Activated T-helper 1 cell treated with anti-CD3 and anti-CD28 coated beads, Interleukin-12 subunit alpha, Interleukin-12 subunit beta, Interleukin-2, Interleukin-4 antibody, amounts not matched to agents 30 ng/mL and 10 ng/mL and 1 ng/mL, durations not matched to agents 14 hours and 24 hours and 36 hours (primary cell): ENCODE measurements at regions of chr11 and their contacts with region 1.

Region 1: DNA sequence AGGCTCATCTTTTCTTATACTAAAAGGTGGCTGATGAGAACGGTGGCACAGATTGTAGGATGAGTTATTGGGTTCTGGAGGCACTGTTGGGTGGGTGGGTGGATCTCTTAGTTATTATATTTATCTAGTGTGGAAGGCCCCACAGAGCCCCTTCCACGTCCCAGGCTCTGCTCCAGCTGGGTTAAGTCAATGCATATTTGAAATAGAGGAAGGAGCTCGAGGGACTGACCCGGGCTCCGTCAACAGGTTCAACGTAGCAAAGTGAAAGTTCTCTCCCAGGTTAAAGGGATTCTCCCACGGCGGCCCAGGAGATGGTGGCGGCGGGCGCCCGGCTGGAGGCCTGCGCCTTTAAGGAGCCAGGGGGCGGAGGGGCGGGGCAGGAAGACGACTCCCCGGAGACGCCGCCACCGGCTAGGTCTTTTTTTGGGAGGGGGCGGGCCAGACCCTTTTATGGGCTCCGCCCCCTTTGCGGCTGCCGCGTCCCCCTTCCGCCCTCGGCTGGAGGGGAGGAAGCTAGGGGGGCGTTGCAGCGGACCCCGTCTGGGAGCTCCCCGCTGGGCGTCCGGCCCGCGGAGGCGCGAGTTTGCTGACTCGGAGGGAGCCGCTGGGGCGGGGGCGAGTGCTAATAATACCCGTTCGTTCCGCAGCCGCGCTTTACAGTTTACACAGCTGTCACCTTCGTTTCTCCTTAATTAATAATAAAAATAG is 1.5 kb upstream of the INPPL1 start:
- DNase-seq: peak; percentile 95
- H3K4me3 Mint-ChIP-seq: peak overlapping the region; percentile 85
- H3K27ac Mint-ChIP-seq: peak overlapping the region; percentile 83
- H3K4me1 Mint-ChIP-seq: peaks cover 20% of the 10 kb centered on the region
- H3K27me3 Mint-ChIP-seq: peaks cover 4% of the 10 kb centered on the region

Region 2: GRCh38 chr11:71787098-71787823 is 435.8 kb before region 1 on chr11:
- intact Hi-C with region 1: loop called (anchors 1 kb)
- DNase-seq: peak; percentile 91
- H3K4me3 Mint-ChIP-seq: peak overlapping the region; percentile 97
- H3K27ac Mint-ChIP-seq: peak overlapping the region; percentile 97
- H3K4me1 Mint-ChIP-seq: peaks cover 23% of the 10 kb centered on the region
- H3K27me3 Mint-ChIP-seq: no peaks in the 10 kb centered on the region

Region 3: DNA sequence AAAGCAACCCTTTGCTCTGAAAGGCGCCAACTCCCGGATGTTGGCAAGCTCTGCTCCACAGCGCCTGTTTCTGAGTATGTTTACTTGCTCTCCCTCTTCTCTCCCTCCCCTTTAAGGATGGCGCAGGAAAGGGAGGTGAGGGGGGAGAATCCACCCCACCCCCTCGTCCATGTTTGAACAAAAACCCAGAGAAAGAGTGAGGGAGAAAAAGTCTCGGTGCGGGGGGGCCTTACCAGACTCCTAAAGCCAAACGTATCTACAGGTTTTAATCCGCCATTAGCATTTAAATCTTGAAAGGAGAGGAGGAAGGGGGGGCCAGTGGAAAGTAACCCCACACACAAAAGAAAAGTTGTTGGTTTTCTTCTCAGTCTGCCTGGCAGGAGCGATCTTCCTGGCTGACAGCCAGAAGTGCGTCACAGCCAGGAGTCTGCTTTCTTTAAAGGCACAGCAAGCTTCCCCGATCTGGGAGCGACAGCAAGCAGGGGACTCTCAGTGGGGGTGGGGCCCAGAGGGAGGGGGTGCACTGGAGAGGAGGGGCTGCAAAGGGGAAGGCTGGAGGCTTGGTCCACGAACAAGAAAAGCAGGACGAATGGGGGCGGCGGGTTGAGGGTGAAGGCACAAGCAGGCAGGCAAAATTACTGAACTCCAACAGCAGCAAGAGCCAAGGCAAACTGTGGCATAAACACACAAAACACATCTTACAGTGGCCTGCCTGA is 182.2 kb before region 1 on chr11:
- intact Hi-C with region 1: loop called (anchors 1 kb)
- DNase-seq: peak; percentile 59
- H3K4me3 Mint-ChIP-seq: no peak overlapping the region
- H3K27ac Mint-ChIP-seq: no peak overlapping the region
- H3K4me1 Mint-ChIP-seq: peaks cover 23% of the 10 kb centered on the region
- H3K27me3 Mint-ChIP-seq: no peaks in the 10 kb centered on the region

Region 4: DNA sequence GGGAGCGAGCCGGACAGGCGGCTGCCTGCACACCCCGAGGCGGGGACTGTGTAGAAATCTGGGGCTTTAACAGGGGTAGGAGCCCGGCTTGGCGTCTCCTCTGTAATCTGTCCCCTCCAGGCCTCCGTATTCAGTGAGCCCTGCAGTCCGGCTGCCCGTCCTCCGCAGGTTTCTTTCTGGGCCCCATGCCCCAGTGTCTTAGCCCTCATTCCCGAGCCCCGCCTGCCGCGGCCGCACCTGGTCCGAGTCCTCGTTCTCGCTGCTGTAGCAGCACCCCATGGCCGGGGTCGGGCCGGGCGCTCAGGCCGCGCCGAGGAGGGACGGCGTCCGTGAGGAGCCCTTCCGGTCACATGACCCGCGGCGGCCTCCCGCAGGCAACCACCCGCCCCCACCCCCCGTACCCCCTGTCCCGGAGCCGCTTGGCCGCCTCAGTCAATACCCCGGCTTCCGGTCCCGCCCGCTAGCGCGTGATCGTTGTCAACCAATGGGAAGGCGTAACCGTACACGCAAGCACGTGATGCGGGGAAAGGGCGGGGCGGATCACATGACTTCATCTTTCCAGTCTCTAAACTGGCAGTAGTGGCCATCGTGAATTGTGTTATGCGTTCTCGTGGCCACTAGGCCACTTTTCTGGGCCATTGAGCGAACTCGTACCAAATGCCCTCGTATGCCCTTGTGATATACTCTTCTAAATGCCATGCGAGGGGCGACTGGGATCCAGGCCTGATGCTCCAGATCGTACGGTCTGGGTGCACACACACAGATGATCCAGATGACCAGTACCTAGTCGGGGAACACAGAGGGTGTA is 119.9 kb before region 1 on chr11 and contains the start of gene LAMTOR1:
- intact Hi-C with region 1: loop called (anchors 1 kb)
- DNase-seq: peak; percentile 97
- H3K4me3 Mint-ChIP-seq: peak within 1 kb of the TSS; percentile 95
- H3K27ac Mint-ChIP-seq: peak within 1 kb of the TSS; percentile 87
- H3K4me1 Mint-ChIP-seq: peaks cover 41% of the 10 kb centered on the region
- H3K27me3 Mint-ChIP-seq: no peaks in the 10 kb centered on the region
- total RNA-seq, gene LAMTOR1: 70.2 and 77.7 TPM in 2 replicates

Region 5: DNA sequence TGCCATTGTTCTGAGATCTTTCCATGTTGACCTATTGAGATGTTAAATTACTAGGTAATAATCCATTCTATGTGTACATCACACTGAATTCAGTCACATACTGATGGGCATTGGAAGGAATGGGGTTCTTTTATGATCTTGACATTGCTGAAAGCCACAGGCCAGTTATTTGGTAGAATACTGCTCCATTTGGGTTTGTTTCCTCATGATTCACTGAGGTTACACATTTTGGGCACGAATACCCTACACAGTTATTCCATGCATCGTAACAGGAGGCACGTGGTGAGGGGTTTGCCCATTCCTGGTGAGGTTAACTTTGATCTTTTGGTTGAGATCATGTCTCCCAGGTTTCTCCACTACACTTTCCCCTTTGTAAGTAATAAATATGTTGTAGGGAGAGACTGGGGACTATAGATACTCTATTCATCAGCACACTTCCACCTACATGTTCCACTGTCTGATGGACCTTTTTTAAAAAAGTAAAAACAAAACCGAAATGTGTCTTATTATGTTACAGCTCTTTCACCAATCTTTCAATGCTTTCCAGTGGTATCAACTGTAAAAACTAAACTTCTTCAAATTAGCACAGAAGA is 43.2 kb before region 1 on chr11:
- intact Hi-C with region 1: loop called (anchors 2 kb)
- DNase-seq: no peak
- H3K4me3 Mint-ChIP-seq: no peak overlapping the region
- H3K27ac Mint-ChIP-seq: no peak overlapping the region
- H3K4me1 Mint-ChIP-seq: peaks cover 5% of the 10 kb centered on the region
- H3K27me3 Mint-ChIP-seq: peaks cover 9% of the 10 kb centered on the region

Region 6: GRCh38 chr11:72413914-72414628 is 191.0 kb after region 1 on chr11:
- intact Hi-C with region 1: loop called (anchors 5 kb)
- DNase-seq: peak; percentile 64
- H3K4me3 Mint-ChIP-seq: no peak overlapping the region
- H3K27ac Mint-ChIP-seq: no peak overlapping the region
- H3K4me1 Mint-ChIP-seq: peaks cover 31% of the 10 kb centered on the region
- H3K27me3 Mint-ChIP-seq: no peaks in the 10 kb centered on the region

Region 7: DNA sequence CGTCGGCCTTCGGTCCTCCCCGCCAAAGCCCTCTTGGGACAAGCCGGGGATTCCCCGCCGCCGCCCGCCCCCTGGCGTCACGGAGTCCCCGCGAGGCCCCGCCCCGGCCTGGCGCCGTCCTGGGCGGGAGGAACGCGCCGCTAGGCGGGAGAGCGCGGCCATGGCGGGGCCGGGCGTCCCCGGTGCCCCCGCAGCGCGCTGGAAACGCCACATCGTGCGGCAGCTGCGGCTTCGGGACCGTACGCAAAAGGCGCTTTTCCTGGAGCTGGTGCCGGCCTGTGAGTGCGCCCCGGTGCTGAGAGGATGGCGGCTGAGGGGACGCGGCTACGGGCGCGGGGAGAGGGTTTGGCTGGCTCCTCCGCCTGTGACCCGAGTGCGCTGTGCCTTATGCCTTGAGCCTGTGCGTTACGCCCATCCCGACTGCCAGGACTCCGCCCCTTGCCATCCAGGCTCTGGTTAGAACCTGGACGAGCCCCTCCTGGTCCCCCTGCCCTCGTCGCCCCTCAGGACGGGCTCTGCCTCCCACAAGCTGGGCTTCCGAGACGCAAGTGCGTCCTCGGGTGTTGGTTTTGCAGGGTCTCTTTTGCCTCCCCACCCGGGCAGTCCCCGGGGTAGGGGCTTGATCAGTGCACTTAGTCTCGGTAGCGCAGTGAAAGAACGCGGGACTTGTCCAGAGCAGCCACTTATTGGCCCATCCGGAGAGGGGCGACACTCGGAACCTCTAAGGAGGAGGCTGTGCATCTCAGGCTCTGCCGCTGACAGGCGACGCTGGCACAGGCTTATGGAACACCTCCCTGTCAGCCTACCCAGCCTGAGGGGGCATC is 591.4 kb after region 1 on chr11 and contains the start of gene ATG16L2:
- intact Hi-C with region 1: loop called (anchors 1 kb)
- DNase-seq: peak; percentile 90
- H3K4me3 Mint-ChIP-seq: peak within 1 kb of the TSS; percentile 99
- H3K27ac Mint-ChIP-seq: peak within 1 kb of the TSS; percentile 98
- H3K4me1 Mint-ChIP-seq: peaks cover 54% of the 10 kb centered on the region
- H3K27me3 Mint-ChIP-seq: no peaks in the 10 kb centered on the region
- total RNA-seq, gene ATG16L2: 69.2 and 71.1 TPM in 2 replicates